AG04450 (cell line): ENCODE measurements at regions of chr11 and their contacts with region 1.

Region 1: DNA sequence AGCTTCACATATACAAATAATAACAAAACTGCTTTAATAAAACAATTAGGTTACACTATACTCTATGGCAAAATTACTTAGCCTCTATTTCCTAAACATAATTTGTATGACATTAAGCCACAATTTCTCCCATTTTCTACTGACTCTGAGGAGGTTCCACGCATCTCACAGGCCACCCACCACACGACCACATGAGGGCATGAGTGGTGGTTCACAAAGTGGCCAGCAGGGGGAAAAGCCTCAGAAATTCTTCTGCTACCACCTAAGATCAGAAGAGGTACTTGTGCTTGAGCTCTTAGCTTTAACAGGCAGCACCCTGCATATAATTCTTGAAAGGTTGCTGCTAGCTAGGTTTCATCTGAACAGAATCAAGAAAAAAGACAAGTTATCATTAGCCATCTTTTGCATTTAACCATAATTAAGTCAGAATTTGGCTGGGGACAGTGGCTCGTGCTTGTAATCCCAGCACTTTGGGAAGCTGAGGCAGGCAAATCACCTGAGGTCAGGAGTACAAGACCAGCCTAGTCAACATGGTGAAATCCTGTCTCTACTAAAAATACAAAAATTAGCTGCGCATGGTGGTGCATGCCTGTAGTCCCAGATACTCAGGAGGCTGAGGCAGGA is 7.7 kb downstream of the LPXN start:
- DNase-seq: no peak
- H3K4me3 ChIP-seq: no peak overlapping the region
- H3K27ac ChIP-seq: no peak overlapping the region
- H3K27me3 ChIP-seq: no peaks in the 10 kb centered on the region
- CTCF ChIP-seq: peak; percentile 89

Region 2: GRCh38 chr11:58471892-58472291 is 96.1 kb before region 1 on chr11:
- CTCF ChIA-PET with region 1: no interaction called
- POLR2A ChIA-PET with region 1: no interaction called
- DNase-seq: no peak
- H3K4me3 ChIP-seq: no peak overlapping the region
- H3K27ac ChIP-seq: no peak overlapping the region
- H3K27me3 ChIP-seq: no peaks in the 10 kb centered on the region
- CTCF ChIP-seq: no peak

Region 3: DNA sequence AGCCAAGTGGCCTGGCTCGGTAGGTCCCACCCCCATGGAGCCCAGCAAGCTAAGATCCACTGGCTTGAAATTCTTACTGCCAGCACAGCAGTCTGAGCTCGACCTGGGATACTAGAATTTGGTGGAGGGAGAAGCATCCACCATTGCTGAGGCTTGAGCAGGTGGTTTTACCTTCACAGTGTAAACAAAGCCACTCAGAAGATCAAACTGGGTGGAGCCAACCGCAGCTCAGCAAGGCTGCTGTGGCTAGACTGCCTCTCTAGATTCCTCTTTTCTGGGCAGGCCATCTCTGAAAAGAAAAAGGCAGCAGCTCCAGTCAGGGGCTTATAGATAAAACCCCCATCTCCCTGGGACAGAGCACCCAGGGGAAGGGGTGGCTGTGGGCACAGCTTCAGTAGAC is 37.8 kb before region 1 on chr11:
- CTCF ChIA-PET with region 1: interaction called, 23 read pairs
- POLR2A ChIA-PET with region 1: no interaction called
- DNase-seq: no peak
- H3K4me3 ChIP-seq: no peak overlapping the region
- H3K27ac ChIP-seq: no peak overlapping the region
- H3K27me3 ChIP-seq: no peaks in the 10 kb centered on the region
- CTCF ChIP-seq: no peak

Region 4: GRCh38 chr11:58579192-58580129 is 11.5 kb after region 1 on chr11:
- CTCF ChIA-PET with region 1: interaction called, 45 read pairs
- POLR2A ChIA-PET with region 1: interaction called, 3 read pairs
- DNase-seq: peak; percentile 78
- H3K4me3 ChIP-seq: peak overlapping the region; percentile 85
- H3K27ac ChIP-seq: peak overlapping the region; percentile 94
- H3K27me3 ChIP-seq: no peaks in the 10 kb centered on the region
- CTCF ChIP-seq: peak; percentile 76

Region 5: GRCh38 chr11:58675334-58676155 is 107.5 kb after region 1 on chr11:
- CTCF ChIA-PET with region 1: interaction called, 30 read pairs
- POLR2A ChIA-PET with region 1: no interaction called
- DNase-seq: peak; percentile 26
- H3K4me3 ChIP-seq: no peak overlapping the region
- H3K27ac ChIP-seq: no peak overlapping the region
- H3K27me3 ChIP-seq: peaks cover 7% of the 10 kb centered on the region
- CTCF ChIP-seq: peak; percentile 100

Region 6: DNA sequence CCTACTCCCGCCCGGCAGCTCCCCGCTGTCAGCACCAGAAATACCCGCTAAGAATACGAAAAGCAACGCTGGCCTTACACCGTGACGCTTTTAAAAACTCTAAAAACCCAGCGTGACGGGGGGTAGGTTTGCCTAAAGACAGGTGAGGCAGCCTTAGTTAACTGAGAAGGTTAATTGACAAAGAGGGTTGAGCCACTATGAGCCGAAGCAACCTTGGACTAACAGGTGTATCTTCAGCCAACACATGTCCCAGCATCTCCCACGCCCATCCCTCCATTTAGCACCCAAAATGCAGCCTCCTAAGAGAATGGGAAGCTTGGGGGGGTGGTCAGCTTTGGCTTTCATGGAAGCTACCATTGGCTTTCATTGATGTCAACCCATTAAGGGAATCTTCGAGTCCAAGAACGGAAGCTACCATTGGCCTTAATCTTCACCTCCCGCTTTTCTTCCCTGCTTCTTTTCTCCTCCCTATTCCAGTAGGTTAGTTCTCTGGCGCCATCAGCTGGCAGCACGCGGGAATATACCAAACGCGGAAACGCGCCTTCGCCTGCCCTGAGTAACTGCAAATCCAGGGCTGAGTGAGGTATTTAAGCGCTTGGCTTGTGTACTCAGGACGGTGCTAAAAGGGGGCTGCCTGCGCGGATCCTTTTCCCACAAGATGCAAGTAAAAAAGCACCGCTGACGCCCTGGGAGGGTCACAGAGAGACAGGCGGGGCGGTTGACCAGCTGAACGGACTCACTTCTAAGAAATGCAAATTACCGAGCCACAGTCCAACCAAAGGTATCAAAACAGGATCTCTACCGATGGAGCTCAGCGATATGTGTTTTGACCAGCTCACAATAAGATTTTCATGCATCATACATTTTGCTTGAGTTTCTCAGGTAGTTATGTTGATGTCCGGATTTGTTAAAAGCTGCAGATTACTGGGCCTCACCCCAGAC is 332.7 kb after region 1 on chr11:
- CTCF ChIA-PET with region 1: interaction called, 12 read pairs
- POLR2A ChIA-PET with region 1: no interaction called
- DNase-seq: peak; percentile 61
- H3K4me3 ChIP-seq: peak overlapping the region; percentile 44
- H3K27ac ChIP-seq: no peak overlapping the region
- H3K27me3 ChIP-seq: no peaks in the 10 kb centered on the region
- CTCF ChIP-seq: peak; percentile 75

Region 7: DNA sequence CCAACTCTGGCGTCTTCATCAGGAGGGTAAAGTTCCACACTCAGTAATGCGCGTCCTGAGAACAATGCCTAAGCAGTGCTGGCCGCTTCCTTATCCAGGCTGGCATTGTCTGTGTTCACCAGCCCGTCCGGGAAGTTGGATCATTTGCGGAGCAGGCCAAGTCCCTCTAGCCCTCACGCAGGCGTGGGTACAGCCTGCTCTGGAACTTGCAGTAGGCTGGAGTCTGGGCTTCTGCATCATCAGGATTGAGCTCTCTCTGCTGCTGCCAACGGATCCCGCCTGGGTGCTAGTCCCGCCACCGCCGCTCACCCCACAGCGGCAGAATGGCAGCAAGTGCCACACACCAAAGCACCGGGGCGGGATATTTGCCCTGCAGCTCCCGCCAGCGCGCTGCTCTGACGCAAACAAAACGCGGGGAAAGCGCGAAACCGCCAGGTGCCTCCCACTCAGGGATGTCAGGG is 400.3 kb after region 1 on chr11:
- CTCF ChIA-PET with region 1: no interaction called
- POLR2A ChIA-PET with region 1: no interaction called
- DNase-seq: no peak
- H3K4me3 ChIP-seq: no peak overlapping the region
- H3K27ac ChIP-seq: no peak overlapping the region
- H3K27me3 ChIP-seq: peaks cover 4% of the 10 kb centered on the region
- CTCF ChIP-seq: no peak